Caco-2 (cell line): ENCODE measurements at regions of chr9 and their contacts with region 1.

Region 1: DNA sequence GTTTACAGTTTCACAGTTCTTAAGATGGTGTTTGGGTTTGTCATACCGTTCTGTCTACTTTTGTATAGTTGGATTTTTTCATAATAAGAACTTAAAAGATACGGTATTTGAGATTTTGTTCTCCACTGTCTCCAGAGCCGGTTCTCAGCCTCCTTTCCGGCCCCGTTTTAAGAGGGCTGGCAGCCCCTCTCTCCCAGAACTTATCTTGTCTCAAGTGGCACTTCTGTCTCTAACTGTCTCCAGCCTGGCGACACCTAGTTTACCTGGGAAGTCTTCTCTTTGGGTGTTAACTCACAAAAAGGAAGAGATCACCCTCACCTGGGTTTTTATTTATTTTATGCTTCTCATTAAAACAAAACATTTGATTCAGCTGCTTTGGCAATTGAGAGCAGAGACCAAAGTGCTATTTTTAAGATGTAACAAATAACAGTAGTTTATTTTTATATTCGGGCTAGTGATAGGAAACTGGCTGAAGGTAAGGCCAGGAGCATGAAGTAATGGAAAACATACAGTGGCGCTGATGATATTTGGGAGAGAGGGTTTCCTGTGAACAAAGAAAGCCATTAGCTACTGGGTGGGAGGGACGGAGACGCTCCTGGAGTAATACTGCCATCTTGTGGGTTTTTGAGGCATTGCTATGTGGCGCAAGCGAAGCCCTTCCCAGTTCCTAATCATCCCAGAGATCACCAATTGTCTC is 48.3 kb downstream of the ACER2 start:
- DNase-seq: peak; percentile 52 to 81
- H3K4me3 ChIP-seq: no peak overlapping the region
- H3K4me3 Mint-ChIP-seq: peak overlapping the region; percentile 9
- H3K27ac Mint-ChIP-seq: no peak overlapping the region
- H3K4me1 ChIP-seq: no peaks in the 10 kb centered on the region
- H3K4me1 Mint-ChIP-seq: no peaks in the 10 kb centered on the region
- H3K27me3 ChIP-seq: no peaks in the 10 kb centered on the region
- H3K27me3 Mint-ChIP-seq: no peaks in the 10 kb centered on the region
- CTCF ChIP-seq: peak; percentile 78 to 89

Region 2: GRCh38 chr9:19028835-19029451 is 428.2 kb before region 1 on chr9:
- CTCF ChIA-PET with region 1: no interaction called
- POLR2A ChIA-PET with region 1: no interaction called
- intact Hi-C with region 1: loop called (anchors 1 kb)
- DNase-seq: peak in 1 of 2 experiments; percentile 49
- H3K4me3 ChIP-seq: no peak overlapping the region
- H3K4me3 Mint-ChIP-seq: no peak overlapping the region
- H3K27ac Mint-ChIP-seq: no peak overlapping the region
- H3K4me1 ChIP-seq: no peaks in the 10 kb centered on the region
- H3K4me1 Mint-ChIP-seq: no peaks in the 10 kb centered on the region
- H3K27me3 ChIP-seq: no peaks in the 10 kb centered on the region
- H3K27me3 Mint-ChIP-seq: peaks cover 15% of the 10 kb centered on the region
- CTCF ChIP-seq: peak; percentile 55 to 58

Region 3: GRCh38 chr9:19048966-19049916 is 407.9 kb before region 1 on chr9 and contains the start of gene RRAGA:
- CTCF ChIA-PET with region 1: interaction called, 14 read pairs
- POLR2A ChIA-PET with region 1: no interaction called
- intact Hi-C with region 1: loop called (anchors 1 kb)
- DNase-seq: peak; percentile 96 to 97
- H3K4me3 ChIP-seq: peak within 1 kb of the TSS; percentile 77
- H3K4me3 Mint-ChIP-seq: peak within 1 kb of the TSS; percentile 85
- H3K27ac Mint-ChIP-seq: peak within 1 kb of the TSS; percentile 93
- H3K4me1 ChIP-seq: peaks cover 7% of the 10 kb centered on the region; the same call in 1 of the 2 replicates
- H3K4me1 Mint-ChIP-seq: no peaks in the 10 kb centered on the region
- H3K27me3 ChIP-seq: no peaks in the 10 kb centered on the region
- H3K27me3 Mint-ChIP-seq: no peaks in the 10 kb centered on the region
- CTCF ChIP-seq: peak; percentile 70
- total RNA-seq, gene RRAGA: 37.8 and 44.7 TPM in 2 replicates

Region 4: DNA sequence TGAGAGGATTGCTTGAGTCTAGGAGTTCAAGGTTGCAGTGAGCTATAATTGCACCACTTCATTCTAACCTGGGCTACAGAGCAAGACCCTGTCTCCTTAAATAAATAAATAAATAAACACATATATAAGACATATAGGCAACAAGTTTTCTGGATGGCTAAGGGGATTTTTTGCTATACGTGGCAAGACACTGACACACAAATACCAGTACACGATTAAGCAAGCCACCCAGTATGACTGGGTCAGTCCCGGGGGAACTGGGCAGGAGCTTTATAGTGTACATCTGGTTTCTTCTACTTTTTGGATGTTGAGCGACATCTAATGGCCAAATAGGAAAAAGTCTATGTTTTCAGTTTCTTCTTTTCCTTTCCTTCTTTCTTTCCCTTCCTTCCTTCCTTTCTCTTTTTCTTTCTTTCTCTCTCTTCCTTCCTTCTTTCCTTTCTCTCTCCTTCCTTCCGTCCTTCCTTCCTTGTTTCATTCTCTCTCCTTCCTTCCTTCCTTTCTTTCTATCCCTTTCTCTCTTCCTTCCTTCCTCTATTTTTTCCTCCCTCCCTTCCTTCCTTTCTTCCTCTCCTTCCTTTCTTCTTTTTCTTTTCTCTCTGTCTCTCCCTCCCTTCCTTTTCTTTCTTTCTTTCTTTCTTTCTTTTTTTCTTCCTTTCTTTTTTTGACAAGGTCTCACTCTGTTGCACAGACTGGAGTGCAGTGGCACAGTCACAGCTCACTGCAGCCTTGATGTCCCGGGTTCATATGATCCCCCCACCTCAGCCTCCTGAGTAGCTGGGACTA is 282.8 kb before region 1 on chr9:
- CTCF ChIA-PET with region 1: no interaction called
- POLR2A ChIA-PET with region 1: no interaction called
- intact Hi-C with region 1: loop called (anchors 5 kb)
- DNase-seq: peak; percentile 59 to 68
- H3K4me3 ChIP-seq: no peak overlapping the region
- H3K4me3 Mint-ChIP-seq: no peak overlapping the region
- H3K27ac Mint-ChIP-seq: peak overlapping the region; percentile 23
- H3K4me1 ChIP-seq: peaks cover 14% of the 10 kb centered on the region
- H3K4me1 Mint-ChIP-seq: peaks cover 13% of the 10 kb centered on the region
- H3K27me3 ChIP-seq: no peaks in the 10 kb centered on the region
- H3K27me3 Mint-ChIP-seq: no peaks in the 10 kb centered on the region
- CTCF ChIP-seq: peak; percentile 34 to 37

Region 5: DNA sequence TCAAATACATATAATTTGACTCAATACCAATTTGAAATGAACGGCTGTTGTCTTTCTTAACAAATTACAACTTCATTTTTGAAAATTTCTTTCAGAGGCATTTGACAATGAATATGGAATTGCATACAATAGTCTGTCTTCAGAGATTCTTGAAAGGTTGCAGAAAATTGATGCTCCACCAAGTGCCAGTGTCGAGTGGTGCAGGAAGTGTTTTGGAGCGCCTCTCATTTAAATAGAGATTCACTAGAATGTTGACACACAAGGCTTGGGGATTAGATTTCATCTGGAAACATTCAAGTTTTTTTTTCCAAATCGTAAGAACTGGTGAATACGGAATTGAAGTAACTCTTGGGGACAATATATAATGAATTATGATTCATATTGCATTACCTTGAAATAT is 85.2 kb before region 1 on chr9:
- CTCF ChIA-PET with region 1: interaction called, 4 read pairs
- POLR2A ChIA-PET with region 1: no interaction called
- intact Hi-C with region 1: loop called (anchors 1 kb)
- DNase-seq: no peak
- H3K4me3 ChIP-seq: no peak overlapping the region
- H3K4me3 Mint-ChIP-seq: no peak overlapping the region
- H3K27ac Mint-ChIP-seq: no peak overlapping the region
- H3K4me1 ChIP-seq: peaks cover 3% of the 10 kb centered on the region; the same call in 1 of the 2 replicates
- H3K4me1 Mint-ChIP-seq: peaks cover 7% of the 10 kb centered on the region
- H3K27me3 ChIP-seq: no peaks in the 10 kb centered on the region
- H3K27me3 Mint-ChIP-seq: no peaks in the 10 kb centered on the region
- CTCF ChIP-seq: no peak

Region 6: DNA sequence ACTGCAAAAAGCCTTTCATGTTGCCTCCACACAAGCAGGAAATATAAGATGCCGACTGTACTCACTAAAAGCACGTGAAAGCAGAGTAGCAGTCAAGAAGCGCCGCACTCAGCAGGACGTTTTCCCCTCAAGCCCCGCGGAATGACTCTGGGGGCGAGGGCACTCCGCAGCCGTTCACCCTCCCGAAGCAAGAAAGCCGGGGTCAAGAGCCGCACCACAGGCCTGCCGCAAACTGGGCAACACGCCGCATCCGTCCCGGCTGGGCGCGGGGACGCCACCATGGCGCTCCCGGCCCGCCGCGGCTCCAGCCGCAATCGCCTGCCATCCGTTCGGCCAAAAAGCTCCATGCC is 77.5 kb before region 1 on chr9:
- CTCF ChIA-PET with region 1: interaction called, 4 read pairs
- POLR2A ChIA-PET with region 1: interaction called, 5 read pairs
- intact Hi-C with region 1: loop called (anchors 1 kb)
- DNase-seq: no peak
- H3K4me3 ChIP-seq: peak overlapping the region; percentile 71
- H3K4me3 Mint-ChIP-seq: peak overlapping the region; percentile 82
- H3K27ac Mint-ChIP-seq: peak overlapping the region; percentile 94
- H3K4me1 ChIP-seq: peaks cover 15% of the 10 kb centered on the region
- H3K4me1 Mint-ChIP-seq: peaks cover 23% of the 10 kb centered on the region
- H3K27me3 ChIP-seq: no peaks in the 10 kb centered on the region
- H3K27me3 Mint-ChIP-seq: no peaks in the 10 kb centered on the region
- CTCF ChIP-seq: no peak

Region 7: DNA sequence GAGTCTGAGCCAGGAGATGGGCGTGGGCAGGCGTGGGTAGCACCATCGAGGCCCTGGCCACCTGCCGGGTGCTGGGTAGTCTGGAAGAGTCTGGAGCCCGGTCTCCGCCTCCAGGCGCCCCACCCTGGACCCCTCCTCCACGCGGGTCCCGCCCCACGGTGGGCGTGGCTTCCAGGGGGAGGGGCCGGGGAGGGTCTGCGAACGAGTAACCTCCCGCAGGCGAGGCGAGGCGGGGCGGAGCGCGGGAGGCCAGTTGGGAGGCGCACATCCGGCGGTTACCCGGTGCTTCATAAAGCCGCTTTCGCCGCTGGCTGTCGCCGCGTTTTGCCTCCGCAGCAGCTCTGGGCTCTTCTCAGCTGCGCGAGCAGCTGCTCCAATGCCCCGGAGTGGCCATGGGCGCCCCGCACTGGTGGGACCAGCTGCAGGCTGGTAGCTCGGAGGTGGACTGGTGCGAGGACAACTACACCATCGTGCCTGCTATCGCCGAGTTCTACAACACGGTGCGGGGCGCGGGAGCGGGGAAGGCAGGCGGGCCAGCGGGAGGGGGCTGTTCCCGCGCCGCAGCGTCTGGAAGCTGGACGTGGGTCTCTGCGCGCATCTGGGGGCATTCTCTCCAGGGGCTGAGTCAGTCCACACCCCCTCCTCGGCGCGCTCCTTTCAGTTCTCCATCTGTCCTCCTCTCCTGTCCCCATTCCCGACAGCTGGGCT is 48.3 kb before region 1 on chr9 and contains the start of gene ACER2:
- CTCF ChIA-PET with region 1: no interaction called
- POLR2A ChIA-PET with region 1: no interaction called
- intact Hi-C with region 1: loop called (anchors 2 kb)
- DNase-seq: peak; percentile 92 to 95
- H3K4me3 ChIP-seq: peak within 1 kb of the TSS; percentile 48
- H3K4me3 Mint-ChIP-seq: peak within 1 kb of the TSS; percentile 96
- H3K27ac Mint-ChIP-seq: peak within 1 kb of the TSS; percentile 55
- H3K4me1 ChIP-seq: peaks cover 19% of the 10 kb centered on the region; the same call in 1 of the 2 replicates
- H3K4me1 Mint-ChIP-seq: no peaks in the 10 kb centered on the region
- H3K27me3 ChIP-seq: no peaks in the 10 kb centered on the region
- H3K27me3 Mint-ChIP-seq: no peaks in the 10 kb centered on the region
- CTCF ChIP-seq: no peak
- total RNA-seq, gene ACER2: 2.4 and 2.5 TPM in 2 replicates